ENCODE measurements at regions of chr3 and their contacts with region 1.

Region 1: GRCh38 chr3:30042274-30042859 is 564.0 kb upstream of the TGFBR2 start:
- DNase-seq: peak; percentile 19
- H3K4me3 ChIP-seq: no peak overlapping the region
- CTCF ChIP-seq: peak; percentile 44

Region 2: GRCh38 chr3:29677421-29677820 is 364.9 kb before region 1 on chr3:
- CTCF ChIA-PET with region 1: no interaction called
- POLR2A ChIA-PET with region 1: no interaction called
- DNase-seq: no peak
- H3K4me3 ChIP-seq: no peak overlapping the region
- CTCF ChIP-seq: no peak

Region 3: DNA sequence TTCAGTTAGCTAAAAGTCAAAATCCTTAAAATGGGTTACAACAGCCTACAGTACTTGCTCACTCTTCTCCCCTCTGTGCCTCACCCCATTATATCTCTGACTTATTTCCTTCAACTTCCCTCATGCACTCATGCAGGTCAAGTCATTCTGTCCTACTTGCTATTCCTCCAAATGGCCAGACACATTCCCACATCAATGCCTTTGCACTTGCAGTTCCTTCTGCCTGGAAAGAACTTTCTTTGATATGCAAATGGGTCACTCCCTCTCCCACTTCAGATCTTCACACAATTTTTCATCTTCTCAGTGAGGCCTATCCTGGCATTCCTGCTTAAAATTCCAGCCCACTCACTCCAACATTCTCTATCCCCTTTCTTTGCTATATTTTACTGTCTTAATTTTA is 16.9 kb after region 1 on chr3:
- CTCF ChIA-PET with region 1: interaction called, 10 read pairs
- POLR2A ChIA-PET with region 1: no interaction called
- DNase-seq: no peak
- H3K4me3 ChIP-seq: no peak overlapping the region
- CTCF ChIP-seq: no peak

Region 4: DNA sequence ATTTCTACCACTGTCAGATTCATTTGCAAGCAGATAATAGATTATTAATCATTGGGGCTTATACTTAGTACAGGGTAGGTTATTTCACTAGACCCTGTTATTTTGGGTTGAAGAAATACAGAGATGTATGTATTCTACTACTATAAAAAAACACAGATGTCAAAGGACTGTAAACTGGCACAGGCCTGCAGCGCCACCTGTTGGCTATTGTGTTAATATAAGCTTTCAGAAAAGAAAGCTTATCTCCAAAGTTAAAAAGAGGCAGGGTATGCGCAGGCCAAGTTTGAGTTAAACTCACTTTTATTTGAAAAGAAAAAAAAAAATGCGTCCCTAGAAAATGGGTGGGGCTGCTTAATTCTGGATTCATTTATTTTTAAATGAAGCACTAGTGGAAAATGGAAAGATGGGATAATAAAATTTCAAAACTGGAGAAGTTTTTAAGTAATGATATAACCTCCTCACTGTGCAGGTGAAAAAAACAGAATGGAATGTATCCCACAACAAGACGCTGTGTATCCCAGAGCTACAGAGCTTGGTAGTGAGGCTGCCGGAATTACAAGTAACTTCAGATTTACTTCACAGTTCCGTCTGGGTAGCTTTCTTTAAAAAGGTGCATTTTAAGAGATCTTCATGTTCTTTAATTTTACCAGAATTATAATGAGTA is 156.9 kb after region 1 on chr3:
- CTCF ChIA-PET with region 1: interaction called, 124 read pairs
- POLR2A ChIA-PET with region 1: no interaction called
- DNase-seq: no peak
- H3K4me3 ChIP-seq: no peak overlapping the region
- CTCF ChIP-seq: peak; percentile 57

Region 5: GRCh38 chr3:30708472-30708871 is 666.1 kb after region 1 on chr3:
- CTCF ChIA-PET with region 1: interaction called, 10 read pairs
- POLR2A ChIA-PET with region 1: no interaction called
- DNase-seq: no peak
- H3K4me3 ChIP-seq: no peak overlapping the region
- CTCF ChIP-seq: no peak

Region 6: DNA sequence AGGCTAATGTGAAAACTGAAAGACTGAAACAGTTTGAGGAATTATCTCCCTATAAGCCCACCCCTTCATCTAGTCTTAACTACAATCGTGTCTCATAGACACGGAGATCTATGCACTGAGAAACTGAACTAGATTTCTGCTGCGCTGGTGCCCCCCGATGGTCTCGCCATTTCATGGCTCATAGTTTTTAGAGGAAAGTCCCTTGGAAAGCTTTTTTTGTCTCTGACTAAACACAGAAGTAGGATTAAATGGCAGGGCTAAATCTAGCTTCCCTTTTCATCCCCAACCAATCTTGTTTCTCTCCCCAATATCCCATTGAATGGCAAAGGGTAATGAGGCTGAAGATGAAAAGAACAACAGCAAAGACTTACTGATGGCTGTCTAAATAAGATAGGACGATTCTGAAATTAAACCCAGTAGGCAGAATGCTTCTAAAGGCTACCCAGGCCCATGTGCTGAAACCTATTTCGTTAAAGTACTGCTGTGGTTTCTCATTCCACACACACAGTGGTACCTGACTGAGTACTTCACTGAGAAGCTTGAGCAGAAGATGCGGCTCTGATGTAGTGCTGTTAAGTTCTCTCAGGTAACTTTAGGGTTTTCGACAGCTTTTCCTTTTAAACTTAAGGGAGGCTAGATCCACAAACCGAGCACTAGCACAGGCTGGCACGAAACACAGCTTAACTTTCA is 709.4 kb after region 1 on chr3:
- CTCF ChIA-PET with region 1: interaction called, 105 read pairs
- POLR2A ChIA-PET with region 1: no interaction called
- DNase-seq: no peak
- H3K4me3 ChIP-seq: no peak overlapping the region
- CTCF ChIP-seq: peak; percentile 43

Region 7: GRCh38 chr3:30768703-30769685 is 726.6 kb after region 1 on chr3:
- CTCF ChIA-PET with region 1: interaction called, 34 read pairs
- POLR2A ChIA-PET with region 1: no interaction called
- DNase-seq: no peak
- H3K4me3 ChIP-seq: no peak overlapping the region
- CTCF ChIP-seq: peak; percentile 79

Measured in AG04449 (cell line).